ENCODE measurements at regions of chr19 and their contacts with region 1.

Region 1: GRCh38 chr19:48588670-48589399 is 17.7 kb upstream of the SPACA4 start:
- DNase-seq: peak; percentile 90
- ATAC-seq: peak; percentile 96
- H3K4me3 Mint-ChIP-seq: peak overlapping the region; percentile 36
- H3K27ac Mint-ChIP-seq: no peak overlapping the region
- H3K4me1 Mint-ChIP-seq: peaks cover 15% of the 10 kb centered on the region
- H3K27me3 Mint-ChIP-seq: peaks cover 3% of the 10 kb centered on the region

Region 2: GRCh38 chr19:48308631-48309586 is 279.9 kb before region 1 on chr19:
- CTCF ChIA-PET with region 1: interaction called, 13 read pairs
- DNase-seq: no peak
- ATAC-seq: no peak
- H3K4me3 Mint-ChIP-seq: no peak overlapping the region
- H3K27ac Mint-ChIP-seq: no peak overlapping the region
- H3K4me1 Mint-ChIP-seq: no peaks in the 10 kb centered on the region
- H3K27me3 Mint-ChIP-seq: peaks cover 5% of the 10 kb centered on the region

Region 3: GRCh38 chr19:48513289-48514122 is 75.3 kb before region 1 on chr19:
- CTCF ChIA-PET with region 1: interaction called, 221 read pairs
- DNase-seq: peak; percentile 88
- ATAC-seq: peak; percentile 81
- H3K4me3 Mint-ChIP-seq: no peak overlapping the region
- H3K27ac Mint-ChIP-seq: no peak overlapping the region
- H3K4me1 Mint-ChIP-seq: peaks cover 21% of the 10 kb centered on the region
- H3K27me3 Mint-ChIP-seq: no peaks in the 10 kb centered on the region

Region 4: DNA sequence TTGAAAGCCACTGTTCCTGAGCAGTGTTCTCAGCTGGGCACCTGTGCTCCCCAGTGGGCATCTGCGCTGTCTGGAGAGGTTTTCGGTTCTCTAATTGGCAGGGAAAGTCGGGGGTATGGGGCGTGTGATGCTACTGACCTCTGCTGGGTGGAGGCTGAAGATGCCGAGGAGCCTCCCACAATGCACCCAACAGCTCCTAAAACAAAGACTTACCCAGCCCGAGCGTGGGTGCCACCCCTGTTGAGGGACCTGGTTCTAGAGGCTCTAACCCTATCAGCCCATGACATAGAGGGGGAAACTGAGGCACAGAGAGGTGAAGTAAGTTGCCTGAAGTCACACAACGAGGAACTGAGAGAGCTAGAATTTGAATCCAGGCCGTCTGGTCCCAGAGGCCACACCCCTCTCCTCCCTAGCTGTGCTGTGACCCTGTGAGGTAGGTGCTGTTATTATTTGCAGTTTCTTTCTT is 20.0 kb after region 1 on chr19:
- CTCF ChIA-PET with region 1: interaction called, 25 read pairs
- DNase-seq: peak; percentile 70
- ATAC-seq: peak; percentile 83
- H3K4me3 Mint-ChIP-seq: no peak overlapping the region
- H3K27ac Mint-ChIP-seq: peak overlapping the region; percentile 66
- H3K4me1 Mint-ChIP-seq: peaks cover 2% of the 10 kb centered on the region
- H3K27me3 Mint-ChIP-seq: no peaks in the 10 kb centered on the region